Right cardiac atrium (tissue), 5 donors: ENCODE measurements at regions of chr7 and their contacts with region 1.

Region 1: DNA sequence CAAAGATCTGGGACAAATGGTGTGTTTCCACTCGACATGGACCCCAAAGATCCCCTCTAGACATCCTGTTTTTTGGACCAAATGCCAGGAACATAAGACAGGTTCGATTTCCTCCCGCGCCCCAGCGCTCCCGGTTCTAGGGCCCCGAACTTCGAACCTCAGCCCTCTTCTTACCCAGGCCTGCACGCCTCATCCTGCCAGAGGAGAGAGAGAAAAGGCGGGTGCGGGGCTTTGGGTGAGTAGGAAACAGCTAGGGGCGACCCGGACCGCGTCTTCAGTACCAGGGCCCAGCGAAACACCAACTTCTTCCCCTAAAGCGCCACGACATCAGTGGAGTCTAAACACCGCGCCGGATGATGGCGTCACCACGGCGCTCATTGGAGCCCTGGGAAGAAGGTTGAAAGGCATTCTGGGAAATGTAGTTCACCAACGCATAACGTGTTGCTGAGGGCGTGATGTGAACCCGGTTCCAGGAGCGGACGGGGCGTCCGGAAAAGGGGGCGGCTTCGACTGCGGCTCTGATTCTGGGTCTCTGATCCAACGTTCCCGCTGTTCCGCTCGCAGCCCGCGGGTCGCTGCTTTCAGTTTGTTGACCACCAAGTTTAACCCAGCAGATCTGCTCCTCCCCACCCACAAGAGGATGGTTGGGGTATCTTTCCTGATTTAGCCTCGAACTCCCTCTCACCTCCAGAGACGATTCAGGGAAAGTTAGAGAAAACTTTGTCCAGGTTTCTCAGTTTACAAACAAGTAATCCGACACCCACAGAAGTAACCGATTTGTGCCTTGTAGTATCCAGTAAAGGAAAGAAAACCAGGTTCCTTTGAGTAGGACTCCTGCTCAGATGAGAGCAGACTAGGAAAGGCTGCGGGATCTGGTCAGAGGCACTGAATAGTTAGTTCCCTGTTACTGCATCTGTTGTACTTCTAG is at the start of gene BET1:
- DNase-seq: peak; percentile 96 to 99 (median 97)
- ATAC-seq: peak; percentile 99 to 100
- H3K4me3 ChIP-seq: peak within 1 kb of the TSS; percentile 80
- H3K27ac ChIP-seq: peak within 1 kb of the TSS; percentile 61
- H3K4me1 ChIP-seq: no peaks in the 10 kb centered on the region
- H3K27me3 ChIP-seq: no peaks in the 10 kb centered on the region
- total RNA-seq, gene BET1: 13.5 to 17.9 (median 15.8) TPM

Region 2: GRCh38 chr7:93921607-93922566 is 82.4 kb before region 1 on chr7 and contains the start of gene GNG11:
- intact Hi-C with region 1: loop called in 1 of 4 experiments (anchors 10 kb)
- DNase-seq: peak; percentile 90 to 95 (median 95)
- ATAC-seq: peak; percentile 96 to 99
- H3K4me3 ChIP-seq: peak within 1 kb of the TSS; percentile 88
- H3K27ac ChIP-seq: peak within 1 kb of the TSS; percentile 93
- H3K4me1 ChIP-seq: peaks cover 2% of the 10 kb centered on the region
- H3K27me3 ChIP-seq: no peaks in the 10 kb centered on the region
- total RNA-seq, gene GNG11: 12.1 to 17.6 (median 15.5) TPM

Region 3: DNA sequence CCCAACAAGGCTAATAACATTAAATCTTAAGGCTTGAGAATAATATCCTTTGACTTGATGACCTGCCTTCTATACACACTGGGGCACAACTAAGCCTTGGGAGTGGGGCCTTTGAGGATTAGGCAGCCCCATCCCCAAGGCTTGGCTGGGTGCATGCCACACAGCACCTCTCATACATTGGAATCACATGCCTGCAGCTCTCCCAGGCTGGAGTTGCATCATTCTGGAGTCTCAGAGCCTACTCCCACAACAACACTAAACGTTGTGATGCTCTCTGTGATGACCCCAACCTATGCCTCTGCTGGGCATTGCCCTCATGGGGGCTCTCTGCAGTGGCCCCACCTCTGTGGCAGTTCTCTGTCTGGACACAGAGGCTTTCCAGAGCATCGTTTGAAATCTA is 683.5 kb after region 1 on chr7:
- intact Hi-C with region 1: no loop called
- DNase-seq: no peak
- ATAC-seq: no peak
- H3K4me3 ChIP-seq: no peak overlapping the region
- H3K27ac ChIP-seq: no peak overlapping the region
- H3K4me1 ChIP-seq: no peaks in the 10 kb centered on the region
- H3K27me3 ChIP-seq: no peaks in the 10 kb centered on the region